ENCODE measurements at regions of chr4 and their contacts with region 1.

Region 1: DNA sequence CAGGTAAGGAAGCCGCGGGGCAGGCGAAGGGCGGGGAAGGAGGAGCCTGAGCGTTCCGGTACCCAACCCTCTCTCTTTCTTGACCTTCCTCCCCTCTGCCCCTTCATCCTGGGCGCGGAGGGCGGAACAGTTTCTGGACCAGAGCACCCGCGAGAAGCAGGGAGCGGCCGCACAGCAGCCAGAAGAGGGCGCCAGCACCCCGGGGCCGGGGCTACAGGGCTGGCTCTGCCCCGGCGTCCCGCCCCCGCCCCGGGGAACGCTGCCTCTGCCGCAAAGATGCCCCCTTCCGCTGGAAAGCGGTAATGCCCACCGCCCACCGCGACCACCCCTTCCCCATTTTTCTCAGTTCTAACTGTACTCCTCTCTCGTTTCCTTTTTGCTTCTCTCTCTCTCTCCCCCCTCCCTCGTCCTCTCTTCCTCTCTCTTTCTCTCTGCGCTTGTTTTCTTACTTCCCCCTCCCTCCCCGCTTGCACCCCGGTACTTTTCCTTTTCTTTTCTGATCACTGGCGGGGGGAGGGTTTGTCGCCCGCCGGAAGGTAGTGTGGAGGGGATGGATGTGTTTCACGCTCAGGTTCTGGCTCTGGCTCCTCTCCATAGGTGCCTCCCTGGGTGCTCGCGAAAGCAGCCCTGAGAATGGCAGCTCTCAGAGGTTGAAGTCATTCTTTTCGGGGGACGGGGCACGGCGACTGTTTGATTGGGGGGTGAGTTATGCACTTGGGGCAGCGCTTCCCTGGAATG is 13.1 kb upstream of the PRDM8 start:
- DNase-seq: peak; percentile 92
- H3K4me3 Mint-ChIP-seq: peak overlapping the region; percentile 98
- H3K27ac Mint-ChIP-seq: peak overlapping the region; percentile 98
- H3K4me1 Mint-ChIP-seq: peaks cover 70% of the 10 kb centered on the region
- H3K27me3 Mint-ChIP-seq: peaks cover 15% of the 10 kb centered on the region

Region 2: GRCh38 chr4:78938868-78939666 is 1245.2 kb before region 1 on chr4 and contains the start of gene PAQR3:
- intact Hi-C with region 1: loop called (anchors 5 kb)
- DNase-seq: peak; percentile 82
- H3K4me3 Mint-ChIP-seq: peak within 1 kb of the TSS; percentile 97
- H3K27ac Mint-ChIP-seq: peak within 1 kb of the TSS; percentile 88
- H3K4me1 Mint-ChIP-seq: peaks cover 47% of the 10 kb centered on the region
- H3K27me3 Mint-ChIP-seq: peaks cover 16% of the 10 kb centered on the region
- total RNA-seq, gene PAQR3: 19.6 and 19.8 TPM in 2 replicates

Region 3: GRCh38 chr4:80007745-80008149 is 176.5 kb before region 1 on chr4:
- intact Hi-C with region 1: loop called (anchors 1 kb)
- DNase-seq: no peak
- H3K4me3 Mint-ChIP-seq: peak overlapping the region; percentile 41
- H3K27ac Mint-ChIP-seq: peak overlapping the region; percentile 88
- H3K4me1 Mint-ChIP-seq: peaks cover 74% of the 10 kb centered on the region
- H3K27me3 Mint-ChIP-seq: no peaks in the 10 kb centered on the region

Region 4: DNA sequence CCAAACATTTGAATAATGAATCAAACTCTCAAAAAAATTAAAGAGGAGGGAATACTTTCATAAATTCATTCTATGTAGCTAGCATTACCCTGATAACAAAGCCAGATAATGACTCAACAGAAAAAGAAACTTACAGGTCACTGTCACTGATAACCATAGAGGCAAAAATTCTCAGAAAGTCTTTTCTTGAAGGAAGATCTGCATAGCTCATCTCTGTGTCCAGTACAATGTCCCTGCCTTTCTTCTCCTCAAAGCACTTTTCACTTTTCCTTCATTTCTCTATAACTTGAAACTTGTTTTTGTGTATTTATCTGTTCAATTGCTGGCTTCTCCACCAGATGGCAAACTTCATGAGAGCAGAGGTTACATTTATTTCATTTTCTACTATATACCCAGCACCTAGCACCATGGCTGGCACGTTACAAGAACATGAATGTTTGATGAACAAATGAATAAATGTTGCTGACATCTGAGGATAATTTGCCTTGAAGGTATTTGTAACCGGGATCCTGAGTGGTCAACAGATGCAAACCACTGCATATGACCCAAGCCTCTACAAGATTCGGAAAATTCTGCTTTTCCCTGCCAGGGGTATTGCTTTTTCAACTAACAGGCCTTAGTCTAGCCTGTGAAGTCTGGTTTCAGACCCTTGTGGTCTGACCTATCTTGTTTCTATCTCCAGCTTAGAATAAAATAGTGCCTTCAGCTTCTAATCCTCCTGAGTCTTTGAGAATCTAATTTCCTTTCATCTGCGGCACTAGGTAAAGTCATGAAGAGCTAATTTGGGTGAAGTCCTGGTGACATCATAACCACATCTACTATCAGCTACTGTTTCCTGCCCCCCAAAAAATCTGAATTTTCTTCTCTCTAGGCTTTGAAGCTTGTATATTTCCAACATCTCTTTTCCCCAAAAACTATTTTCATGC is 58.7 kb before region 1 on chr4:
- intact Hi-C with region 1: loop called (anchors 1 kb)
- DNase-seq: peak; percentile 17
- H3K4me3 Mint-ChIP-seq: peak overlapping the region; percentile 71
- H3K27ac Mint-ChIP-seq: peak overlapping the region; percentile 92
- H3K4me1 Mint-ChIP-seq: peaks cover 68% of the 10 kb centered on the region
- H3K27me3 Mint-ChIP-seq: no peaks in the 10 kb centered on the region

Region 5: DNA sequence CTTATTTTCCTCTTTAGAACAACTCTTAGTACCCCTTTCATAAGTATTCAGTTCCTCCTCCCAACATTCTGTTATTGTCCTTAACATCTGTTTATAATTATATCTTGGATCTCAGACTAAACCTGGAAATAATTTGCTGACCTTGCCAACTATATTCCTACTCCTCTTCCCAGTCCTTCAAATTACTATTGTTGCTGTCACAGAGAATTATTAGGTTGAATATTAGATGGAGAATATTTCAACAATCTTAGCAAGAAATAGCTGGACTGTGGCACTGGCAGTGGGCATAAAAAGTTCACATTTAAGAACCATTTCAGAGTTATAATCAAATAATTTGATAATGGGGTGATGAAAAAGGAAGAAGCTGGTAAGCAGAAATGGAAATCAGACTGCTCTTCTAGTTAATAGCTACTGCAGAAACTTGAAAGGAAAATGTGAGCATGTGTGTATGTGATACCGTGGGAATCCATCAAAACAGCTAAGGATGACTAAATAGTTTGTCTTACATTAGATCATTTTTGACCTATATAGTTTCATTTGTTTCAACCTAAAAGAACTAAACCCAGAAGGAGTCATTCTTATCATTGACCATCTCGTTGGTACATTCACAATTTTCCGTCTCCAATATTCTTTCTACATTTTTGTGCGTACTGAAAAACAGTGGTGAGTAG is 30.2 kb before region 1 on chr4:
- intact Hi-C with region 1: loop called (anchors 1 kb)
- DNase-seq: no peak
- H3K4me3 Mint-ChIP-seq: peak overlapping the region; percentile 21
- H3K27ac Mint-ChIP-seq: peak overlapping the region; percentile 90
- H3K4me1 Mint-ChIP-seq: peaks cover 27% of the 10 kb centered on the region
- H3K27me3 Mint-ChIP-seq: peaks cover 3% of the 10 kb centered on the region

Region 6: GRCh38 chr4:80202190-80202711 is 18.0 kb after region 1 on chr4:
- intact Hi-C with region 1: loop called (anchors 1 kb)
- DNase-seq: peak; percentile 79
- H3K4me3 Mint-ChIP-seq: peak overlapping the region; percentile 80
- H3K27ac Mint-ChIP-seq: peak overlapping the region; percentile 73
- H3K4me1 Mint-ChIP-seq: peaks cover 29% of the 10 kb centered on the region
- H3K27me3 Mint-ChIP-seq: peaks cover 21% of the 10 kb centered on the region

Region 7: DNA sequence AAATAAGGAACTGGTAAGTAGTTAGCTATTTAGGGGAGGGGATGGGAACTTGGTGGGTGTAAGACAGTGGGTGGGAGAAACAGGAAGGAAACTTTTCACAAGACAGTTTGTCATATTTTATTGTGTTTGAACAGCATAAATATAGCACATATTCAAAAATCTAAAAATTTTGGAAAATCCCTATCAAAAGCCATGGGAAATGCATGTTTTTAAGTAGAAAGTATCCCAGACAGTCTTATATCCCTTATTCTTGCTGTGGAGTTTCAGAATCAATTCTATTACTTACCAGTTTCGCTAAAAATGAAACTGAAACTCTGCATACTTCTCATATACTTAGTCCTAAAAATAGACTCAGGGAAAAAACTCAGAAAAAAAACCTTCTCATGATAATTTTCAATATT is 1309.8 kb after region 1 on chr4:
- intact Hi-C with region 1: loop called (anchors 10 kb)
- DNase-seq: no peak
- H3K4me3 Mint-ChIP-seq: peak overlapping the region; percentile 50
- H3K27ac Mint-ChIP-seq: peak overlapping the region; percentile 25
- H3K4me1 Mint-ChIP-seq: peaks cover 43% of the 10 kb centered on the region
- H3K27me3 Mint-ChIP-seq: peaks cover 10% of the 10 kb centered on the region

Measured in activated T-helper 1 cell treated with anti-CD3 and anti-CD28 coated beads, Interleukin-12 subunit alpha, Interleukin-12 subunit beta, Interleukin-2, Interleukin-4 antibody, amounts not matched to agents 30 ng/mL and 10 ng/mL and 1 ng/mL, durations not matched to agents 14 hours and 24 hours and 36 hours (primary cell).